GM12878 (cell line): ENCODE measurements at regions of chr6 and their contacts with region 1.

Region 1: GRCh38 chr6:20572940-20573339 is 38.7 kb downstream of the CDKAL1 start:
- DNase-seq: no peak
- ATAC-seq: no peak
- H3K4me3 ChIP-seq: no peak overlapping the region
- H3K27ac ChIP-seq: no peak overlapping the region
- H3K4me1 ChIP-seq: no peaks in the 10 kb centered on the region
- H3K27me3 ChIP-seq: no peaks in the 10 kb centered on the region
- CTCF ChIP-seq: no peak
- EP300 ChIP-seq: no peak
- POLR2A ChIP-seq: no peak
- RAD21 ChIP-seq: no peak

Region 2: GRCh38 chr6:20589266-20589665 is 16.3 kb after region 1 on chr6:
- CTCF ChIA-PET with region 1: interaction called, 6 read pairs
- POLR2A ChIA-PET with region 1: no interaction called
- RAD21 ChIA-PET with region 1: no interaction called
- SMC1A ChIA-PET with region 1: interaction called, 14 read pairs
- in situ Hi-C with region 1: no loop called
- intact Hi-C with region 1: no loop called
- DNase-seq: no peak
- ATAC-seq: no peak
- H3K4me3 ChIP-seq: no peak overlapping the region
- H3K27ac ChIP-seq: no peak overlapping the region
- H3K4me1 ChIP-seq: no peaks in the 10 kb centered on the region
- H3K27me3 ChIP-seq: no peaks in the 10 kb centered on the region
- CTCF ChIP-seq: no peak
- EP300 ChIP-seq: no peak
- POLR2A ChIP-seq: no peak
- RAD21 ChIP-seq: no peak

Region 3: GRCh38 chr6:21295506-21296240 is 722.7 kb after region 1 on chr6:
- CTCF ChIA-PET with region 1: no interaction called
- POLR2A ChIA-PET with region 1: no interaction called
- RAD21 ChIA-PET with region 1: no interaction called
- SMC1A ChIA-PET with region 1: no interaction called
- in situ Hi-C with region 1: no loop called
- intact Hi-C with region 1: no loop called
- DNase-seq: no peak
- ATAC-seq: no peak
- H3K4me3 ChIP-seq: no peak overlapping the region
- H3K27ac ChIP-seq: no peak overlapping the region
- H3K4me1 ChIP-seq: no peaks in the 10 kb centered on the region
- H3K27me3 ChIP-seq: no peaks in the 10 kb centered on the region
- CTCF ChIP-seq: no peak
- EP300 ChIP-seq: no peak
- POLR2A ChIP-seq: no peak
- RAD21 ChIP-seq: no peak